Motor neuron (in vitro differentiated cells): ENCODE measurements at regions of chr11 and their contacts with region 1.

Region 1: DNA sequence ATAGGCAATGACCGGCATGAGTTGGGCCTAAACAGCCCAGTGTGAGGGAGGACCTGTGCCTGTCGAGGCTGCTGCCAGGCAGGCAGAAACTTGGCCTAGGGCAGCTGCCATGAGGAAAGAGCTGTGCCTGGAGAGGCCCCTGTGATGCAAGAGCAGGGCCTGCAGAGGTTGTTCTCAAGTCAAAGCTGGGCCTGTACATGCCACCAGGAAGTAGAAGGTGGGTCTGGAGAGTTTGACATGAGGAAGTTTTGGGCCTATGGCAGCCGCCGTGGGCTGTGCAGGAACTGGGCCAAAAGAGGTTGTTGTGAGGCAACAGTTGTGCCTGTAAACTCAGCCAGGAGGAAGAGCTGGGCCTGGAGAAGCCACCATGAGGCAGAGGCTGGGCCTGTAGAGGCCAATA is 43.2 kb downstream of the OR4C45 start:
- ATAC-seq: no peak
- H3K4me3 ChIP-seq: no peak overlapping the region
- H3K27ac ChIP-seq: no peak overlapping the region
- H3K4me1 ChIP-seq: no peaks in the 10 kb centered on the region

Region 2: GRCh38 chr11:50333861-50334260 is 258.0 kb after region 1 on chr11:
- in situ Hi-C with region 1: loop called in 1 of 9 experiments (anchors 25 kb)
- ATAC-seq: peak in 2 of 8 experiments; percentile 47 to 65
- H3K4me3 ChIP-seq: no peak overlapping the region
- H3K27ac ChIP-seq: no peak overlapping the region
- H3K4me1 ChIP-seq: no peaks in the 10 kb centered on the region